MCF 10A (cell line): ENCODE measurements at regions of chr5 and their contacts with region 1.

Region 1: DNA sequence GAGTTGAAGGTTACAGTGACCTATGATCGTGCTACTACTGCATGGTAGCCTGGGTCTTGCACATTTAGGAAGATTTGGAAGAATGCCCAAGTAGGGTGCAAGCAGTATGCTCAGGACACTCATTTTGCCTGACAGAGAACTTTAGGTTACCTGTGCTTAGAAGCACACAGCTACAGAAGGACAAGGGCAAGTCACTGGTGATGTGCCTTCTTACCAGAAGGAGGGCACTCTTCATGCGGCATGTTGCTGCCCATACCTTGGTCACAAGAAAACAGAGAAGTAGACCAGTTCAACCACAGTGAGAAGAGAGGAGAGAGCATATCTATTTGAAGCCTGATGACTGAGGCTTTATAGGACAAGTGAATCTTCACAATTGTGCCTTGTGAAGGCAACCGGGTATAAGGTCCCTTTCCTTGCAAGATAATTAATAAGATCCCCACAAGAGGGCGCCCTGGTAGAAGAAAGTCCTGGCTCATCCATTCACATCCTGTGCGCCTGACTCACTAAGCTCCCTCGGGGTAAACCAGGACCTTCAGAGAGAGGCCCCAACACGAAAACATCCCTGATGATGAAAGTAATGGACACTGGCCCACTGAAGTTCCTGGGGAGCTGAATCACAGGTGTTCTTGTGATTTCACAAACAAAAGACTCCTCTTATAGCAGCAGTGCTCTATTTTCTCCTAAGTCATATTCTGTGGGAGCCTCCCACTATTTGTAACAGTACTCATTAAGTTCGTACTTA is 38.1 kb upstream of the STARD4 start:
- DNase-seq: peak; percentile 99
- H3K4me3 Mint-ChIP-seq: no peak overlapping the region
- H3K27ac Mint-ChIP-seq: no peak overlapping the region
- H3K4me1 Mint-ChIP-seq: peaks cover 11% of the 10 kb centered on the region
- H3K27me3 Mint-ChIP-seq: no peaks in the 10 kb centered on the region
- CTCF ChIP-seq: peak; percentile 63

Region 2: DNA sequence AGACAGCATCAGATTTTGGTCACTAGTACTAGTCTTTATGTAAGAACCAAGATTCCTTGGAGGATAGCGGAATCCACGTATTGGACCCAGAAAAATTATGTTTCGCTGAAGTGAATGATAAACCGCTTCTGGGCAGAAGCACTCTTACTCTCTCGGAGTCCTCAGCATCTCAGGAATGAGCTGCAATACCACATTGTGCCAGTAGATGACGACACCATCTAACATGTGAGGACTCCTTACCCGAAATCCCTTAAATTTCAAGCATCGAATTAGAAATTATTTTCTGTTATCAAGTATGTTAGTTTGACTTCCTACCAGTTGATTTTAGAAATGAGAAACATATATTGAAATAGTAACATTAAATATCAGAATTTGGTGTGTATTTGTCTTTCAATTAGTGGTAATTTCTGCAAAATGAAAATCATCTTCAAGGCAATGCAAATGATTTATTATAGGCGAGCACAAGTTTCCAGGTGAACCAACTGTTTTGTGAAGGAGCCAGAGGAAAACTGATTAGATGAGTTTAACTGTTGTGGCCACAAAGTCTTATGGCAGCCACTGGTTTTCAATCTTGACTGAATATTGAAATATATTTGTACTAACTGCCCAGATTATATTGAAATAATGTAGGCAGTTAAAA is 392.2 kb before region 1 on chr5:
- CTCF ChIA-PET with region 1: interaction called, 7 read pairs
- POLR2A ChIA-PET with region 1: no interaction called
- intact Hi-C with region 1: loop called (anchors 1 kb)
- DNase-seq: peak; percentile 84
- H3K4me3 Mint-ChIP-seq: no peak overlapping the region
- H3K27ac Mint-ChIP-seq: no peak overlapping the region
- H3K4me1 Mint-ChIP-seq: no peaks in the 10 kb centered on the region
- H3K27me3 Mint-ChIP-seq: no peaks in the 10 kb centered on the region
- CTCF ChIP-seq: peak; percentile 99

Region 3: DNA sequence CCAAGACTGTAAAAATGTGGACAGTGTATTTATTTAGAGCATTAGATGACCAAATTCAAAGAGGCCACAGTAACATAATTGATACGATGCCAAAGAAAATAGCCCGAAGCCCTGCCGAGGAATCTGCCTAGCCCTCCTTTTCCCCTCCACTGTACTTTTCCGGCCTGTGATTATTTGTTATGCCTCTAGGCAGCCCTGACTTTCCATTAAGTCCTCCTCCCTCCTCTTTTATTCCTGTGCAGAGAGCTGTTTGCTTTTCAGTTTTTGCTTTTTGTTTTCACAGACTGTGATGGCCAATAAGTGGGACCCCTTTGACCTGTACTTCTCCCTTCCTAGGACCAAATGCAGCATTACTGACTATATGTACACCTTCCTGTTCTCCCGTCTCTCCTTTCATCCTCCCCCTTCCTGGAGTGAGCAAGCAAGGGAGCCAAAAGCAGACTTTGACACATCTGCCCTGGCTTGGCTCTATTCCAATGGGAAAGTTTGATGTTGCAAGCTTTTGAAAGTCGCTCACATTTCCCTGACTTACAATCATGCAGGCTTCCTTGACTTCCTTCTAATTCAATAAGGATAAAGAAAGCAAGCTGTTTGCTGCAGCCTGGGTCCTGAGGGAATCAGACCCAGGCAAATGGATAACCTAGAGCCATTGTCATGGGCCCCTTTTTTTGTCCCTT is 130.4 kb after region 1 on chr5:
- CTCF ChIA-PET with region 1: interaction called, 16 read pairs
- POLR2A ChIA-PET with region 1: interaction called, 3 read pairs
- intact Hi-C with region 1: loop called (anchors 1 kb)
- DNase-seq: peak; percentile 98
- H3K4me3 Mint-ChIP-seq: peak overlapping the region; percentile 35
- H3K27ac Mint-ChIP-seq: peak overlapping the region; percentile 83
- H3K4me1 Mint-ChIP-seq: peaks cover 29% of the 10 kb centered on the region
- H3K27me3 Mint-ChIP-seq: no peaks in the 10 kb centered on the region
- CTCF ChIP-seq: no peak

Region 4: DNA sequence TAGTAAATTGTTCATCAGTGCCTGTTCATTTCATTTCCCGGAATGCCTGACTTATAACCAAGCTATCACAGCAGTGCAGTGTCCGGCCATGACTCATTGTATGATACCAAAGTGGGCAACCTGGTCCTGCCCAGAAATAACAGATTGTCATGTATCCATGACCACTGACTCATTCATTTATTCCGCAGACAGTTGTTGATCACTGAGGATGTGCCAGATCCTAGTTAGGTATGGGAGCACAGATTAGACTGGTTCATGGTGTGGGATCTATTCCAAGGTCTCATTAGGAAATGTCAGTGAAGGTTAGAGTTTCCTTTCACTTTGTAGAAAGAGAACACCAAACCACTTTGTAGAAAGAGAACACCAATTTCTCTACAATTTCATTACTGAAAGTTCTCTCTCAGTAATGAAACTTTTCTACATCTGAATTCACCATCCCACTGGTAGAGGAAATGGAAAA is 197.9 kb after region 1 on chr5:
- CTCF ChIA-PET with region 1: interaction called, 3 read pairs
- POLR2A ChIA-PET with region 1: no interaction called
- intact Hi-C with region 1: loop called (anchors 2 kb)
- DNase-seq: peak; percentile 92
- H3K4me3 Mint-ChIP-seq: peak overlapping the region; percentile 2
- H3K27ac Mint-ChIP-seq: peak overlapping the region; percentile 40
- H3K4me1 Mint-ChIP-seq: peaks cover 24% of the 10 kb centered on the region
- H3K27me3 Mint-ChIP-seq: no peaks in the 10 kb centered on the region
- CTCF ChIP-seq: no peak

Region 5: DNA sequence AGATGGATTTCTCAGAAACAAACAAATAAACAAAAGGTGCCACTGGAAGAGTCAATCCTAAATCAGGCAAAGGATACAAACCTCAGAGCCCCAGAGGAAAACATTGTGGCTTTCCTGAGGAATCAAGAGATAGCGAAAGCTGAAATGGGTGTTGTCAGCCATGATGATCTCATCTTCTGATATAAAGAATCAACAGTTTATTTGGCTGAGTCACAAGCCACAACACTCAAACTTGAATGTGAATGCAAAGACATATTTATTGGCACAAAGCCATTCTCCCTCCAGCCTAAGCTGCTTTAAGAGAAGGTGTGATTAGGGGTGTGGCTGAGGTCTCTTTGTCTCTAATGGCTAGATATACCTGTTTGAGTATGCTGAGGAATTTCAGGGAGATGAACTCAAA is 279.9 kb after region 1 on chr5:
- CTCF ChIA-PET with region 1: interaction called, 6 read pairs
- POLR2A ChIA-PET with region 1: interaction called, 6 read pairs
- intact Hi-C with region 1: loop called (anchors 5 kb)
- DNase-seq: peak; percentile 94
- H3K4me3 Mint-ChIP-seq: no peak overlapping the region
- H3K27ac Mint-ChIP-seq: peak overlapping the region; percentile 73
- H3K4me1 Mint-ChIP-seq: peaks cover 27% of the 10 kb centered on the region
- H3K27me3 Mint-ChIP-seq: no peaks in the 10 kb centered on the region
- CTCF ChIP-seq: no peak

Region 6: GRCh38 chr5:111929867-111930266 is 379.4 kb after region 1 on chr5:
- CTCF ChIA-PET with region 1: no interaction called
- POLR2A ChIA-PET with region 1: no interaction called
- intact Hi-C with region 1: loop called (anchors 5 kb)
- DNase-seq: peak; percentile 90
- H3K4me3 Mint-ChIP-seq: no peak overlapping the region
- H3K27ac Mint-ChIP-seq: no peak overlapping the region
- H3K4me1 Mint-ChIP-seq: peaks cover 36% of the 10 kb centered on the region
- H3K27me3 Mint-ChIP-seq: no peaks in the 10 kb centered on the region
- CTCF ChIP-seq: no peak